H1 (cell line): ENCODE measurements at regions of chr19 and their contacts with region 1.

Region 1: GRCh38 chr19:57708641-57709361 is at the start of gene ZNF154:
- DNase-seq: peak; percentile 65 to 81
- H3K4me3 ChIP-seq: peak within 1 kb of the TSS; percentile 91 to 97 (median 94)
- H3K27ac ChIP-seq: peak within 1 kb of the TSS; percentile 95
- H3K4me1 ChIP-seq: peaks cover 0 to 9% (median 4%) of the 10 kb centered on the region in 4 experiments; a peak in 5 of 7 replicates
- H3K27me3 ChIP-seq: no peaks in the 10 kb centered on the region
- CTCF ChIP-seq: no peak
- EP300 ChIP-seq: no peak
- POLR2A ChIP-seq: peak; percentile 53 to 92
- RAD21 ChIP-seq: no peak
- total RNA-seq, gene ZNF154: 9.5 and 11.6 TPM in 2 replicates

Region 2: GRCh38 chr19:57689750-57690149 is 19.1 kb before region 1 on chr19:
- CTCF ChIA-PET with region 1: interaction called, 3 read pairs
- POLR2A ChIA-PET with region 1: interaction called, 17 read pairs
- DNase-seq: no peak
- H3K4me3 ChIP-seq: no peak overlapping the region
- H3K27ac ChIP-seq: no peak overlapping the region
- H3K4me1 ChIP-seq: no peaks in the 10 kb centered on the region
- H3K27me3 ChIP-seq: no peaks in the 10 kb centered on the region
- CTCF ChIP-seq: no peak
- EP300 ChIP-seq: no peak
- POLR2A ChIP-seq: no peak
- RAD21 ChIP-seq: no peak

Region 3: DNA sequence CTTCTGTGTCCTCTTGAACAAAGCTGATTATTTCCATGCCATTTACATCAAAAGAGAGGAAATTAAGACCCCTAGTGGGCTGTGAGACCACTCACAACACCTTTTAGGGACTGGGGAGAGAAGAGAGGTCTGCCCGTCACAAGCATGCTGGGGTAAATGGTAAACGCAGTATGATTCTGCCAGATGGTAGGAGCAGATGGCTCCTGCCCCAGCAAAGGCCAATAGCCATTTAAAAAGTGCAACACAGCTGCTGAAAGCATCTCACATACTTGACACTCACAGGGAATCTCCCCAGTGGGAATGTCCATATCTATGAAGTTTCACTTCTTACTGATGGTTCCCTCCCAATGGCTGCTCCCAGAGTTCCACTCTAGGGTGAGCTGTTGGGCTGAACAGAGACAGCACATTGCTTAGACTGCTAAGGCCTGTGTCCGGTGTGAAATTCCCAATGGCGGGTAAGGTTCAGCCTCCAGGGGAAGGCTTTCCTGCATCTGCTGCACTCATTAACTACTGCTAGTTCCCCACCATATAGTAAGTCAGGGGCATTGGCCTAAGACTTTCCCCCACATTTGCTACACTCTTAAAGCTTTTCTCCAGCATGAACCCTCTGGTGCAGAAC is 11.2 kb after region 1 on chr19:
- CTCF ChIA-PET with region 1: interaction called, 4 read pairs
- POLR2A ChIA-PET with region 1: interaction called, 51 read pairs
- DNase-seq: peak in 1 of 2 experiments; percentile 44
- H3K4me3 ChIP-seq: no peak overlapping the region
- H3K27ac ChIP-seq: no peak overlapping the region
- H3K4me1 ChIP-seq: peaks cover 0 to 8% (median 5%) of the 10 kb centered on the region in 4 experiments; a peak in 4 of 7 replicates
- H3K27me3 ChIP-seq: 0 out of 7 replicates have a peak, but pooled peaks cover 0 to 2% (median 0%) of the 10 kb centered on the region in 4 experiments
- CTCF ChIP-seq: no peak
- EP300 ChIP-seq: no peak
- POLR2A ChIP-seq: no peak
- RAD21 ChIP-seq: no peak; a peak in 1 of 4 replicates

Region 4: DNA sequence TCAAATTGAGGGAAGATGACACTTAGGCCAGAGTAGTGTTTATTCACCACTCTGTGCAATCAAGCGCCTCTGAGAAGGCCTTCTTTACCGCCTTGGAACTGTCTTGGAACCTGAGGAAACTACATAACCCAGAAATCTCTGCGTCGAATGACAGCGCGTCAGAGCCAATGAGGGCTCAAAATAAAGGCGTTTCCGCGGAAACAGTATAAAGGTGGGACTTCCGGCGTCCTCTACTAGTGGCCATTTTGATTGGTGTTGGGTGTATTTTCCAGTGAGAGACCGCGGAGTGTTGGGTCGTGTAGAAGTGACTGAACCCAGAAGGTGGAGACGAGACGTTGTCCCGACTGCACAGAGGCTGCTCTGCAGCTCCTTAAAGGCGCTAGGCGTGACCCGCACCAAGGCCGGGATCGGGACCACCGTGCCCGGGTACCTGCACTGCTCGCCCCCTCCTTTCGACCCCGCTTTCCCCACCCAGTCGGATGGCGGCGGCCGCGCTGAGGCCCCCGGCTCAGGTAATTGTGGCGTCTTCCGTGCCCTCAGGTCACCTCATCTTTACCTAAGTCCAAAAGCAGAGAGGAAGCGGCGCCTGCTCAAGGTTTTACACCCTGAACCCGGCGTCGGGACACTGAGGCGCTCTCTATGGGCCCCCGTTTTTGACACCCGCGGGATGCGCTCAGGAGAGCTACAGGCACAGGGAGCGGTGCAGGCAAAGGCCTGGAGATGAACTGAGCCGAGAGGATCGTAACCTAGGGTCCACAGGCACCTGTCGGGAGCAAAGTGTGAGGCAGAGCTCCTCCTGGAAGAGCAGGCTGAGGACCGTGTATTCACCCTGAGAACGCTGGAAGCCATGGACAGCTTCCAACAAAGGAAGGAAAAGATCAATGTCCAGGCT is 38.0 kb after region 1 on chr19 and contains the start of gene ZNF776:
- CTCF ChIA-PET with region 1: interaction called, 4 read pairs
- POLR2A ChIA-PET with region 1: interaction called, 23 read pairs
- DNase-seq: peak; percentile 43 to 77
- H3K4me3 ChIP-seq: peak within 1 kb of the TSS; percentile 94 to 99 (median 98)
- H3K27ac ChIP-seq: peak within 1 kb of the TSS; percentile 89
- H3K4me1 ChIP-seq: peaks cover 0 to 10% (median 5%) of the 10 kb centered on the region in 4 experiments; a peak in 5 of 7 replicates
- H3K27me3 ChIP-seq: no peaks in the 10 kb centered on the region
- CTCF ChIP-seq: no peak
- EP300 ChIP-seq: no peak
- POLR2A ChIP-seq: peak; percentile 52 to 87
- RAD21 ChIP-seq: no peak
- total RNA-seq, gene ZNF776: 17.3 and 20.5 TPM in 2 replicates

Region 5: DNA sequence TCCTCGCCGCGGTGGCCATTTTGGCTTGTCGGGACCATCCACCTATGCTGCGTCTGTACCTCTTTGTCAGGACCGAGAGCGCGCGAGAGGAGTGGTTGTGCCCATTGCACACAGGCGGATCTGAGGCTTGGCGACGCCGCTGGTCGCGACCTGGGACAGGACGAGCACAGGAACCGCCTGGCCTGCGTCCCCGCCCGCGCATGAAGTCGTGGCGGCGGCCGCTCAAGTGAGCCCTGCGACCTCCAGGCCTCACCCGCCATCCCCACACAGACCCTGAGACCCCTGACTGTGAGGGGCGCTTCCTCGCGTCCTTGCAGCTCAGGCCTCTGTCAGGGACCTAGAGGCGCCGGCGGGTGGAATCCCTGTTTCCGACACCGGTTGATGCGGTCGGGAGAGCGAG is 77.5 kb after region 1 on chr19:
- CTCF ChIA-PET with region 1: no interaction called
- POLR2A ChIA-PET with region 1: no interaction called
- DNase-seq: no peak
- H3K4me3 ChIP-seq: no peak overlapping the region
- H3K27ac ChIP-seq: no peak overlapping the region
- H3K4me1 ChIP-seq: peaks cover 0 to 2% (median 0%) of the 10 kb centered on the region in 4 experiments; a peak in 1 of 7 replicates
- H3K27me3 ChIP-seq: no peaks in the 10 kb centered on the region
- CTCF ChIP-seq: no peak
- EP300 ChIP-seq: no peak
- POLR2A ChIP-seq: no peak
- RAD21 ChIP-seq: no peak